HepG2 (cell line): ENCODE measurements at regions of chr2 and their contacts with region 1.

Region 1: GRCh38 chr2:115083225-115083624 is 640.8 kb downstream of the DPP10 start:
- DNase-seq: no peak
- ATAC-seq: peak; percentile 32; the same call in 1 of the 3 replicates
- H3K4me3 ChIP-seq: no peak overlapping the region
- H3K27ac ChIP-seq: no peak overlapping the region
- H3K4me1 ChIP-seq: no peaks in the 10 kb centered on the region
- H3K27me3 ChIP-seq: no peaks in the 10 kb centered on the region
- CTCF ChIP-seq: 0 out of 2 replicates have a peak, but pooled peaks have one; percentile 11
- EP300 ChIP-seq: no peak
- POLR2A ChIP-seq: no peak
- RAD21 ChIP-seq: no peak

Region 2: GRCh38 chr2:114949228-114949804 is 133.9 kb before region 1 on chr2:
- CTCF ChIA-PET with region 1: no interaction called
- POLR2A ChIA-PET with region 1: no interaction called
- in situ Hi-C with region 1: no loop called
- intact Hi-C with region 1: loop called (anchors 2 kb)
- DNase-seq: no peak
- ATAC-seq: no peak
- H3K4me3 ChIP-seq: no peak overlapping the region
- H3K27ac ChIP-seq: no peak overlapping the region
- H3K4me1 ChIP-seq: no peaks in the 10 kb centered on the region
- H3K27me3 ChIP-seq: no peaks in the 10 kb centered on the region; a peak in 1 of 5 replicates
- CTCF ChIP-seq: no peak
- EP300 ChIP-seq: no peak
- POLR2A ChIP-seq: no peak
- RAD21 ChIP-seq: no peak

Region 3: GRCh38 chr2:115070002-115070401 is 13.2 kb before region 1 on chr2:
- CTCF ChIA-PET with region 1: no interaction called
- POLR2A ChIA-PET with region 1: no interaction called
- in situ Hi-C with region 1: no loop called
- intact Hi-C with region 1: no loop called
- DNase-seq: no peak
- ATAC-seq: no peak
- H3K4me3 ChIP-seq: no peak overlapping the region
- H3K27ac ChIP-seq: no peak overlapping the region
- H3K4me1 ChIP-seq: no peaks in the 10 kb centered on the region
- H3K27me3 ChIP-seq: no peaks in the 10 kb centered on the region
- CTCF ChIP-seq: no peak
- EP300 ChIP-seq: no peak
- POLR2A ChIP-seq: no peak
- RAD21 ChIP-seq: no peak

Region 4: GRCh38 chr2:115105966-115106365 is 22.7 kb after region 1 on chr2:
- CTCF ChIA-PET with region 1: no interaction called
- POLR2A ChIA-PET with region 1: no interaction called
- in situ Hi-C with region 1: no loop called
- intact Hi-C with region 1: no loop called
- DNase-seq: no peak
- ATAC-seq: no peak
- H3K4me3 ChIP-seq: no peak overlapping the region
- H3K27ac ChIP-seq: no peak overlapping the region
- H3K4me1 ChIP-seq: no peaks in the 10 kb centered on the region
- H3K27me3 ChIP-seq: no peaks in the 10 kb centered on the region
- CTCF ChIP-seq: no peak
- EP300 ChIP-seq: no peak
- POLR2A ChIP-seq: no peak
- RAD21 ChIP-seq: no peak